WTC11 (cell line): ENCODE measurements at regions of chr15 and their contacts with region 1.

Region 1: DNA sequence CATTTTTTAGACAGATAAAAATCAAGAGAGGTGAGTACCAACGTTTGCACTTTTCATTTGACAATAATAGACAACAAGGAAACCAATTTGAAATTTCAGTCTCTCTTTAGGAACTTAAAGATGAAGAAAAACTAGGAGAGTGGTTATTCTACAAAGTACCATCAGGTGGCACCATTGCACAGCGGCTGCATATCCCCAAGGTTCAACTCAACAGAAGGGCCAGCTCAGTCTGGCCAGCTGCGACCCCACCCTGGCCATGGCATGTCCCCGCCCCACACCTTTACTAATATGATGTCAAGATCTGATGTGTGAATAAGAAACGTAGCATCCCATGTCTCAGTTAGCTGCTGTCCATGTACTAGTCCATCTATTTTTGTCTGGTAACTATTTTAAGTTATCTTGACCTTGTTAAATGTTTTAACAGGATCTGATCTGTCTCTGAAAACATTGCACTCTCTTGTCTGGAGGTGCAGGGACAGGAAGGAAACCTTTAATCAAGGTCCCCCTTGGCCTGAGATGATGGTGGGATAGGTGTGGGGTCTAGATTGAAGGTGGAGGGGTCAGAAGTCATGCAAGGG is 35.5 kb upstream of the CGNL1 start:
- DNase-seq: peak; percentile 61
- ATAC-seq: peak; percentile 68
- H3K4me3 Mint-ChIP-seq: no peak overlapping the region
- H3K27ac Mint-ChIP-seq: no peak overlapping the region
- H3K4me1 Mint-ChIP-seq: peaks cover 14% of the 10 kb centered on the region
- H3K27me3 Mint-ChIP-seq: no peaks in the 10 kb centered on the region
- CTCF ChIP-seq: peak; percentile 83

Region 2: GRCh38 chr15:57146506-57147201 is 194.1 kb before region 1 on chr15:
- CTCF ChIA-PET with region 1: interaction called, 10 read pairs
- POLR2A ChIA-PET with region 1: no interaction called
- DNase-seq: no peak
- ATAC-seq: no peak
- H3K4me3 Mint-ChIP-seq: peak overlapping the region; percentile 45
- H3K27ac Mint-ChIP-seq: peak overlapping the region; percentile 88
- H3K4me1 Mint-ChIP-seq: peaks cover 19% of the 10 kb centered on the region
- H3K27me3 Mint-ChIP-seq: no peaks in the 10 kb centered on the region
- CTCF ChIP-seq: peak; percentile 45

Region 3: DNA sequence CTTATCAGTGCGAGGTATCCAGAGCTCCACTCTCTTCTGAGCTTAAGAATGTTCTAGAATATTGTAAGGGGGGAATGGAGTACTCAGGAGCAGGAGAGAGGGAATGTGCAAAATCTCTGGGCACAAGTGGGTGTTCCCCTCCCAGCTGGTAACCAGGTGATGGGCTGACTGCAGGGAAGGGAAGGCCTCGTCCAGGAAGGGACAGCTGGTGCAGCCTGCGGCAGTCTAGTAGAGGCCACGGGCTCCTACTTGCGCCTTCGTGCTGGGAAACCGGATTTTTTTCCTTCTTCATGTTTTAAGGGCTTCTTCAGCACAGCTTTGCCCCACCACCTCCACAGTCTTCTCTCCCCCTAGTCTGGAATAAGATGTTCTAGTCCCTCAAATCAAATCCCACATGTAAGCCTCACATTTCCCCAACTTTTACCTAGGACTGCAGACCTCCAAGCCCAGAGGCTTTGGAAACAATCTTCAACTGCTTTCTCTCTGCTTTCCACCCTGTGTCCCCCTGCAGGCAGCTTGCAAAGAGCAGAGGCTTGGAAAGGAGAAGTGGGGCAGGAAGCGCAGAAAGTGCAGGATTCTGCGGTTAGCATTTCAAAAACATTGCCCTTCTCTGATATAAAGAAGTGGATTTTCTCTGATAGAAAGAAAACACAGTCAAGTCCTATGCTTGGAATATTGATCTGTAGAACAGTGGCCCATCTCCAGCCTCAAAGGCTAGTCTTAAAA is 23.7 kb after region 1 on chr15:
- CTCF ChIA-PET with region 1: interaction called, 32 read pairs
- POLR2A ChIA-PET with region 1: interaction called, 3 read pairs
- DNase-seq: peak; percentile 56
- ATAC-seq: peak; percentile 86
- H3K4me3 Mint-ChIP-seq: no peak overlapping the region
- H3K27ac Mint-ChIP-seq: peak overlapping the region; percentile 81
- H3K4me1 Mint-ChIP-seq: peaks cover 26% of the 10 kb centered on the region
- H3K27me3 Mint-ChIP-seq: no peaks in the 10 kb centered on the region; the same call in 1 of the 2 replicates
- CTCF ChIP-seq: no peak

Region 4: GRCh38 chr15:57375827-57376695 is 35.3 kb after region 1 on chr15 and contains the start of gene CGNL1:
- CTCF ChIA-PET with region 1: interaction called, 19 read pairs
- POLR2A ChIA-PET with region 1: no interaction called
- DNase-seq: peak; percentile 69
- ATAC-seq: peak; percentile 67
- H3K4me3 Mint-ChIP-seq: peak within 1 kb of the TSS; percentile 90
- H3K27ac Mint-ChIP-seq: peak within 1 kb of the TSS; percentile 94; the same call in 1 of the 2 replicates
- H3K4me1 Mint-ChIP-seq: peaks cover 53% of the 10 kb centered on the region
- H3K27me3 Mint-ChIP-seq: peaks cover 30% of the 10 kb centered on the region
- CTCF ChIP-seq: no peak
- total RNA-seq, gene CGNL1: 57.3 to 69.5 TPM (median 67.1 TPM) in 3 replicates

Region 5: GRCh38 chr15:57427367-57427821 is 86.6 kb after region 1 on chr15:
- CTCF ChIA-PET with region 1: interaction called, 13 read pairs
- POLR2A ChIA-PET with region 1: no interaction called
- DNase-seq: peak; percentile 33
- ATAC-seq: peak; percentile 49
- H3K4me3 Mint-ChIP-seq: peak overlapping the region; percentile 20; the same call in 1 of the 2 replicates
- H3K27ac Mint-ChIP-seq: peak overlapping the region; percentile 97
- H3K4me1 Mint-ChIP-seq: peaks cover 87% of the 10 kb centered on the region
- H3K27me3 Mint-ChIP-seq: no peaks in the 10 kb centered on the region
- CTCF ChIP-seq: no peak

Region 6: DNA sequence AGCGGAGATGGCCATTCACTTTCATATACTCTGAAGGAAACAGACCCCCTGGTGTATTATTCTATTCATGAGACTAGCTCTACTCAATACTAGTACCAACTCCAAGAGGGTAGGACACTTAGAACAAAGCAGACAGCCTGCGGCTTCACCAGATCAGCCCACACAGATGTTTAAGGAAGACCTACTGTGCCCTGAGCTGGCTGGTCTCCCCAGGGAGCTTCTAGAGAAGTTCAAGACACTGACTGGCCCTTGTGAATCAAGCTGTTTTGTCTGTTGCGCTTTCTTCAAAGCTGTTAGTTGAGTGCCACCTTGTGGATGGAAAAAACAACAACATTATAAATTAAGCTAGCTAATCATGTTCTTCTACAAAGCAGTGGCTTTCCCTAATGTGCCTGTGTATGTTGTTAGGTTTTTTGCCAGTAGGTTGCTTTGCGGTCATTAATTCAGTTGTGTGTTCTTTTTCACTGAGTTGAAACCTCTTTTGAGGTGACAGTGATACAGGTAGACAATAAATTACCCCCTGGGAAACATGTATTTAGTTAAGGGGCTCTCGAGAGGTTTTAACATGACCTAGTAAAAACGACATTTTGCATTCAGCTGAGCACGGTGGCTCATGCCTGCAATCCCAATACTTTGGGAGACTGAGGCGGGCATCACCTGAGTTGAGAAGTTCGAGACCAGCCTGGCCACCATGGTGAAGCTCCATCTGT is 186.8 kb after region 1 on chr15:
- CTCF ChIA-PET with region 1: interaction called, 140 read pairs
- POLR2A ChIA-PET with region 1: interaction called, 3 read pairs
- DNase-seq: no peak
- ATAC-seq: peak; percentile 92
- H3K4me3 Mint-ChIP-seq: no peak overlapping the region
- H3K27ac Mint-ChIP-seq: no peak overlapping the region
- H3K4me1 Mint-ChIP-seq: peaks cover 11% of the 10 kb centered on the region
- H3K27me3 Mint-ChIP-seq: no peaks in the 10 kb centered on the region
- CTCF ChIP-seq: no peak; the same call in 1 of the 2 replicates

Region 7: DNA sequence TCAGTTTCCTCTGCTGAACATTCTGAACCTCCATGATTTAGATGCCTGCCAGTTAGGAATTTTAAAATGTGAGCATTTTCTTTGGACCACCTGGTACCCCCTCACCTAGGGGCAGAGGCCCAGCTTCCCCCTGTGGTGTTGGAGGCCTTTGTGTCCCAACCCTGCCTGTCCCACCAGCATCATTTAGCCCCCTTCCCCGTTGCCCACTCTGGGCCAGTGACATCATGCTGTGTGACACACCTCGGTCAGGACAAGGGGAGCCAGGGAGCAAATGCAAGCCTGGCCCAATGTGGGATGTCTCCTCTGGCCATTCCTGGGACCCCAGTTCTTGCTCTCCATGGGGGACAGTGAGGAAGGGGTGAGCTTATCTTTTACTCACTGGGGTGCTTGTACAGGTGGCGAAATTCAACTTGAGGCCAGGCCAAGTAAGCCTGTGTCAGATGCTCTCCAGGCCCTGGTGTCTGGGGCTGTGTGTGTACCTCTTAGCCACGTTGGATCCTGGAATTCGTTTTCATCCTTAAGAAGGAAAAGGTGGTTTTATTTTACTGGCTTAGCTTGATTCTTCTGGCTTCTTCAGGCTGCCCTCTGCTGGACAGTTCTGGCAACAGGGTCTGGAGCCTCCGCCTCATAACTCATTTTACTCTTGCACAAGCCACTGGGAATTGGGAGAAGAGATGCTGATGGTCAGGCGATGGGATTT is 201.2 kb after region 1 on chr15:
- CTCF ChIA-PET with region 1: interaction called, 43 read pairs
- POLR2A ChIA-PET with region 1: no interaction called
- DNase-seq: peak; percentile 77
- ATAC-seq: peak; percentile 67
- H3K4me3 Mint-ChIP-seq: no peak overlapping the region
- H3K27ac Mint-ChIP-seq: peak overlapping the region; percentile 89
- H3K4me1 Mint-ChIP-seq: no peaks in the 10 kb centered on the region
- H3K27me3 Mint-ChIP-seq: no peaks in the 10 kb centered on the region
- CTCF ChIP-seq: peak; percentile 60